Activated B cell treated with CpG ODN at 0.5 μM for 24 hours (primary cell): ENCODE measurements at regions of chr15 and their contacts with region 1.

Region 1: GRCh38 chr15:66700802-66701421 is 1.1 kb upstream of the SMAD6 start:
- DNase-seq: peak; percentile 85
- ATAC-seq: peak; percentile 88
- H3K4me3 Mint-ChIP-seq: peak overlapping the region; percentile 88
- H3K27ac Mint-ChIP-seq: peak overlapping the region; percentile 70
- H3K4me1 Mint-ChIP-seq: peaks cover 22% of the 10 kb centered on the region
- H3K27me3 Mint-ChIP-seq: peaks cover 18% of the 10 kb centered on the region
- CTCF ChIP-seq: no peak

Region 2: DNA sequence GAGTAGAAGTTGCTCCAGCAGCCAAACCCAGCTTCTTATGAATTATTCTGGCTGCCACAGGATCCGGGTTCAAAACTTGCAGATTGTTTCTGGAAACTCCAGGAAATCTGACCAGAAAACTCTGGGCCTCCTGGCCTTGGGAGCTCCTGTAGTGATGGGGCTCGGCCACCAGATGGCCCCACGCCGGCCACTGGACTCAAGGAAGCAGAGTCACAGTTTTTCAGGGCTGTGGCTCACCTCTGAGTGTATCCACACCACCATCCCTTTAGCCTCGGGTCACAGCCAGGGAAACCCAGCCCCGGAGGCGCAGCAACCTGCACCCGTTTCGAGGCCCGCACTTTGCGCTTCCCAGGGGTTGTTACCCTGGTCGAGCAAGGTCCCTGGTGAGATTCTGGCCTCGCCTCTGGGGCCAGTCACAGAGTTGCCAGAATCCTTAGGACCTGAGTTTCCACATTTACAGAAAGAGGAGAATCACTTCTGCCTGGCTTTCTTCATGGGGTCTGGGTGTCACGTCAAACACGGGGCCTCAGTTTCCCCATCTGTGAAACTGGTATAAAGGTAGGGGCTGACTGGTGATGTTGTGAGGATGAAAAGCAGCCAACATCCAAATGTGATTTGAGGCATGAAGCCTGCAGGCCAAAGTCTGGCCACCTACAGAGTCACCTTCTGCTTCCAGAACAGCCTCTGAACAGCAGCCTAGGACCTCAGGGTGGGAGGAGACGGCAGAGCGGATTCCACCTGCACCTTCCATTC is 81.6 kb before region 1 on chr15:
- CTCF ChIA-PET with region 1: interaction called, 4 read pairs
- POLR2A ChIA-PET with region 1: interaction called, 8 read pairs
- intact Hi-C with region 1: loop called (anchors 2 kb)
- DNase-seq: peak; percentile 27
- ATAC-seq: peak; percentile 54
- H3K4me3 Mint-ChIP-seq: no peak overlapping the region
- H3K27ac Mint-ChIP-seq: no peak overlapping the region
- H3K4me1 Mint-ChIP-seq: peaks cover 33% of the 10 kb centered on the region
- H3K27me3 Mint-ChIP-seq: peaks cover 25% of the 10 kb centered on the region
- CTCF ChIP-seq: no peak

Region 3: GRCh38 chr15:66841953-66842681 is 141.2 kb after region 1 on chr15:
- CTCF ChIA-PET with region 1: no interaction called
- POLR2A ChIA-PET with region 1: no interaction called
- intact Hi-C with region 1: loop called (anchors 5 kb)
- DNase-seq: peak; percentile 40
- ATAC-seq: peak; percentile 81
- H3K4me3 Mint-ChIP-seq: peak overlapping the region; percentile 68
- H3K27ac Mint-ChIP-seq: no peak overlapping the region
- H3K4me1 Mint-ChIP-seq: peaks cover 16% of the 10 kb centered on the region
- H3K27me3 Mint-ChIP-seq: peaks cover 20% of the 10 kb centered on the region
- CTCF ChIP-seq: no peak

Region 4: DNA sequence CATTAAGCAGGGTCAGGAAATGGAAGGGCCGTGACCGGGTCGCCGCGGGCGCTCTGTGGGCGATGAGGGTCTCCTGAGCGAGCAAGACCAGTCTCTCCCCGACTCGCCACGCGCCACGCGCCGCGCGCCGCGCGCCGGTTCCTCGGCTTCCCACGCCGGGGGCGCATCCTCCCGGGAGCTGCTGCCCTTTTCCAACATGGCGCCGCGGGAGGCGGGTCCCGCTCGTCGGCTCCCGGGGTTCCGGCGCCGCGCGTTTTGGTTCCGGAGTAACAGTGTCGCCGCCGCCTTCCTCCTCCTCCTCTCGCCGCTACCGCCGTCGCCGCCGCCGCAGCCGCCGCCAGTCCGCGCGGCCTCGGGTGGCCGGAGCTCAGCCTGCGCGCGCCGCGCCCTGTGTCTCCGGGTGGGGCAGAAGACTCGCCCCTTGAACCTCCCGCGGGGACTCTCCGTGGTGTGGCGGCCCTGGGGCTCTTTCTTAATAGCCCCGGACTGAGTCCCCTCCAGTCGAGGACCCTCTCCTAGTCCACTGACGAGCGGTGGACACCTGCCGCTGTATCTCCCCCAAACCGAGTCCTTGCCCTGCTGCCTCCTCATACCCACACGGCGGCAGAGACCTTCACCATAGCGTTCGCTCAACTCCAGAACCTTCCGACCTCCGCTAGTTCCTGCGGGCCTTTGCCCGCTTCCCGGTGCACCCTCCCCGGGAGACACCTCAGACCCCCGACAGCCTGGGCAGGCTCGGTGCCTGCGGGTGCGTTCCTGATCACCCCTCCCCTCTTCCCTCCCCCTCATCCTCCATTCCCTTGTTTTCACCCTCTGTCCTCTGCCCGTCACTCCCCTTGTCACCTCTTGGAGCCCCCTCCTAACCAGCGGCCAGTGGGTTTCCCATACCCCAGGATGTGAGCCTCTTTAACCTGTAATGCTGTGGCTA is 841.8 kb after region 1 on chr15 and contains the start of gene MAP2K5:
- CTCF ChIA-PET with region 1: no interaction called
- POLR2A ChIA-PET with region 1: no interaction called
- intact Hi-C with region 1: loop called (anchors 5 kb)
- DNase-seq: peak; percentile 76
- ATAC-seq: peak; percentile 73
- H3K4me3 Mint-ChIP-seq: peak within 1 kb of the TSS; percentile 94
- H3K27ac Mint-ChIP-seq: peak within 1 kb of the TSS; percentile 94
- H3K4me1 Mint-ChIP-seq: peaks cover 56% of the 10 kb centered on the region
- H3K27me3 Mint-ChIP-seq: peaks cover 5% of the 10 kb centered on the region
- CTCF ChIP-seq: no peak
- total RNA-seq, gene MAP2K5: 18.9 and 26.7 TPM in 2 replicates

Region 5: DNA sequence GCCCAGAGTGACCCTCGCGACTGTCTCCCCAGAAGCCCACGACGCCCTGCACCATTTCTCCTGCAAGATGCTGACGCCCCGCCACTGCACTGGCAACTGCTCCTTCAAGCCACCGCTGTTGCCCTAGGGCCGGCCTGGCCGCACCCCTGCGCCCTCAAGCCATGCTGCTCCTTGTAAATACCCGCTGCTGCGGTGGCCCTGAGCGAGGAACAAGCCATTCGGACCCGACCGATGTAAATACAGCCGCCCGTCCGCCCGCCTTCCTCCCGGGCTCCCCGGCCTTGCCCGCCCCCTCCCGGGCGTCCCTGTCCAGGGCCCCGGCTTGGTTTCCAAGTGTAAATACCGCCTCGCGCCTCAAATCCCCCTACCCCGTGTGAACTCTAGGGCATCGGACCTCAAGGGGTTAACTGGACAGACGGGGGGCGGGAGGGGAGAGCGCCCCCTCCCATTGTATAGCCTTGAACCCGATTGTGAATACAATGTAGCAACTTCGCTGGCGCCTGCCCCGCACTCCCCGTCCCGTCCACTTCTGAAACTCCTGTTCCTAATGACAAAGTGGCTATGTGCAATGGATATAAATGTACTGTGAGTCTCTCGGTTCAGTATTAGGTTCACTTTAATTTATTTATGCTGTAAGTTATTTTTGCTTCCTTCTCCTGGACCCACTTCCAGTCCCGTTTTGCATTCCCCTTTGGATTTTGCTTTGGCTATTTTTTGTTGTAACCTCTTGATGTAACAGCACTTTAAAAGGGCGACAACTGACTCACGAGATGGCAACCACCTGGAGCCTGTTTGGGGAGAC is 1133.0 kb after region 1 on chr15:
- CTCF ChIA-PET with region 1: no interaction called
- POLR2A ChIA-PET with region 1: no interaction called
- intact Hi-C with region 1: loop called (anchors 2 kb)
- DNase-seq: peak; percentile 41
- ATAC-seq: peak; percentile 40
- H3K4me3 Mint-ChIP-seq: peak overlapping the region; percentile 79
- H3K27ac Mint-ChIP-seq: no peak overlapping the region
- H3K4me1 Mint-ChIP-seq: peaks cover 50% of the 10 kb centered on the region
- H3K27me3 Mint-ChIP-seq: peaks cover 54% of the 10 kb centered on the region
- CTCF ChIP-seq: no peak